Body of pancreas (tissue), 4 donors: ENCODE measurements at regions of chr17 and their contacts with region 1.

Region 1: DNA sequence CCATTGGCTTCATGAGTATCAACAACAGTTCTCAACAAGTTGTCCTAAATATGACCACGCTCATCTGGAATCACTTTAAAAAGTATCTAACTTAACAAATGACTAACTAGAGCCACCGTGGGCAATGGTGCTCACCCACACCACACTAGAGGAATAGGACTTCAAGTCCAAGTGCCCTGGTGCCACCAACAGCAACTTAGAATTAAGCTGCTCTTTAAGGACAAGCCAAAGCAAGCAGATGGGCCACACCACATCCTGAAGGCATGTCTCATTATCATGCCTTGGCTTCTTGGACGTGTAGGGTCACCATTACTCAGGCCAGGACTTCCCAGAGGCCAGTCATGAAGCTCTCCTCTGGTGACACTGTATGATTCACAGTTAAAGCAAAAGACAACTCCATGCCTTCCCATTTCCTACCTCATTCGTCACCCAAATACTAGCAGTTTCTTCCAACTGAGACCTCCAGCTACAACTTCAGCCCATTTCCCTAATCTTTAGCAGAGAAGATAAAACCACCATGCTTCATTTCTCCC is 9.4 kb upstream of the SLC6A4 start:
- DNase-seq: no peak
- ATAC-seq: no peak
- H3K4me3 ChIP-seq: no peak overlapping the region
- H3K27ac ChIP-seq: no peak overlapping the region
- H3K4me1 ChIP-seq: no peaks in the 10 kb centered on the region
- H3K27me3 ChIP-seq: no peaks in the 10 kb centered on the region
- CTCF ChIP-seq: no peak
- POLR2A ChIP-seq: no peak

Region 2: DNA sequence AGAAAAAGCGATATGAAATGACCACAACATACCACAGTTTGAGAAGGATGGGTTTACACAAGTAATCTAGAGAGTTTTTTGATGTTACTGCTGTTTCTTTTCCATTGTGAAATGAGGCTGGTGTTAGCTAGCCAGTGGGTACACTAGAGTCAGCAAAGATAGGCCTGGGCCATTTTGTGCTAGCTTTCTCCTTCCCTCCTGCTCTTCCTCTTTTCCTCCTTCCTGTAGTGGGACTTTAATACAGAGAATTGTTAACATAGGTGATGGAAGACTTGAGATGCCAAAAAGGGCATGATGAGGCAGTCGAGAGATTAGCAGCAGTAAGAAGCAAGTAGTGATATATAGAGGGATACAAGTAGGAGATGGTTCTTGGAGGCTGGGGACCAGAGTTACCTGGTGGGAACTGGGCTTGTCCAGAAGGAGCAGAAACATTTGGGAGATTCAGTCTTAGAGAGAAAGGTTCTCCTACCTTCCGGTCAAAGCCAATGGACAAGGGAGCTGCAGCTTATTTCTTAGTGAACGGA is 120.6 kb before region 1 on chr17:
- intact Hi-C with region 1: loop called (anchors 10 kb)
- DNase-seq: no peak
- ATAC-seq: no peak
- H3K4me3 ChIP-seq: no peak overlapping the region
- H3K27ac ChIP-seq: no peak overlapping the region
- H3K4me1 ChIP-seq: peaks cover 8% of the 10 kb centered on the region
- H3K27me3 ChIP-seq: no peaks in the 10 kb centered on the region
- CTCF ChIP-seq: no peak
- POLR2A ChIP-seq: no peak